AG04449 (cell line): ENCODE measurements at regions of chr12 and their contacts with region 1.

Region 1: DNA sequence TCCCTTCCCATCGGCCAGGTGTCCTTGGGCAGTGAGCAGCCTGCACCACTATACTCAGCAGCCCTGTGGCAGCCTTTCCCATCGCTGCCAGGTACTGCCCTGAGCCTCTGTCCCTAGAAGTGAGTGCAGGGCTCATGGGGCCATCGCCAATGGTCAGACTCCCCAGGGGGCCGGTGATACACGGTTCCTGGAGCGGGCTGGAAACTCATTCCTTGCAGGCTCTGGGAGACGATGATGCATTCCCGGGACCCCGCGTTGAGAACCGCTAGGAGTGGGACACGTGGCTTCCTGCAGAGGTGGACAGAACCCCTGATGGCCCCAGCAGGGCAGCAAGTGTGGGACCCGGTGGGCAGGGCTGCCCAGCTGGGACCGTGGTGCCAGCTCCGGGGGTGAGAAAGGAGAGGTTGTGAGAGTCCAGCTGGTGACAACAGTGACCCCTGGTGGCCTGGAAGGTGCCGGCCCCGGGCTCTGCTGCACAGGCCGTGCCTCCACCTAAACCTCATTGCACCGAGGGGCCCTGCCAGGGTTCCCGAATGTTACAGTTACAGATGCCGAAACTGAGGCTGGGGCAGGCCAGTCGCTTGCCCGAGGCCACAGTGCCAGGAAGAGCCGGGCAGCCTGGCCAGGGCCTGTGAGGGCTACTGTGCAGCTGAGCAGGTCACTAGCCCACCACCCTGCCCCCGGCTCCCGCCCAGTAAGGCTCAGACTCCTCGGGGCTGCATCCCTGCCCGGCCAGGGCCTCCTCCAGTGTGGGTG is 33.8 kb downstream of the FBRSL1 start:
- DNase-seq: no peak
- H3K4me3 ChIP-seq: no peak overlapping the region
- CTCF ChIP-seq: peak; percentile 84

Region 2: GRCh38 chr12:132153501-132154340 is 370.0 kb before region 1 on chr12:
- CTCF ChIA-PET with region 1: interaction called, 14 read pairs
- POLR2A ChIA-PET with region 1: no interaction called
- DNase-seq: peak; percentile 3
- H3K4me3 ChIP-seq: peak overlapping the region; percentile 29
- CTCF ChIP-seq: peak; percentile 96

Region 3: DNA sequence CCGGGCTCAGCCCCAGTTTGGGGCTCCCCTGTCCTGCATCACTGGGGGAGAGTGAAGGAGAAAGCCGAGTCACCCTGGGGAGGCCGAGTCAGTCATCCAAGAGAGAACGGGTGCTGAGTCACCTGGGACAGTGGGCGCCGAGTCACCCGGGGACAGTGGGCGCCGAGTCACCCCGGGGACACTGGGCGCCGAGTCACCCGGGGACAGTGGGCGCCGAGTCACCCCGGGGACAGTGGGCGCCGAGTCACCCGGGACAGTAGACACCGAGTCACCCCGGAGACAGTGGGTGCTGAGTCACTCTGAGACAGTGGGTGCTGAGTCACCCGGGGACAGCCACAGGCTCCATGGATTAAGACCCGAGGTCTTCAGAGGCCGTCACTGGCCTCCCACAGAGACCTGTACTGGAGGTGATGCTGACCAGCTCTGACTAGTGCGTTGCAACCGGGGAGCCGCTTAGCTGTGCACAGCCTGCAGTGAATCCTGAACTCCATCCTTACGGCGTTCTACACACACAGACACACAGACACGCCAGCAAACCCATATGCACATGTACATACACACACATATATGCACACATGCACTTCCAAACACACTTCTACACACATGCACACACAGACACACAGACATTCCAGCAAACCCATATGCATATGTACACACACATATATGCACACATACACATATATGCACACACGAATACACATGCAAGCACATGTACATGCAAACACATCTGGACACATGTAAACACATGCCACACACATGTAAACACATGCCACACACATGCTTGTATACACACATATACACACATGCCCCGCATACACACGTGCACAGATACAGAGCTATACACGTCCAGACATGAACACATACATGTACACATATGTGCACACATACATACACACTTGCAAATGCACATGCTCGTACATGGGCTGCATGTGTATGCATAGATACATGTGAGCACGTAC is 129.5 kb before region 1 on chr12:
- CTCF ChIA-PET with region 1: no interaction called
- POLR2A ChIA-PET with region 1: no interaction called
- DNase-seq: no peak
- H3K4me3 ChIP-seq: no peak overlapping the region
- CTCF ChIP-seq: no peak

Region 4: DNA sequence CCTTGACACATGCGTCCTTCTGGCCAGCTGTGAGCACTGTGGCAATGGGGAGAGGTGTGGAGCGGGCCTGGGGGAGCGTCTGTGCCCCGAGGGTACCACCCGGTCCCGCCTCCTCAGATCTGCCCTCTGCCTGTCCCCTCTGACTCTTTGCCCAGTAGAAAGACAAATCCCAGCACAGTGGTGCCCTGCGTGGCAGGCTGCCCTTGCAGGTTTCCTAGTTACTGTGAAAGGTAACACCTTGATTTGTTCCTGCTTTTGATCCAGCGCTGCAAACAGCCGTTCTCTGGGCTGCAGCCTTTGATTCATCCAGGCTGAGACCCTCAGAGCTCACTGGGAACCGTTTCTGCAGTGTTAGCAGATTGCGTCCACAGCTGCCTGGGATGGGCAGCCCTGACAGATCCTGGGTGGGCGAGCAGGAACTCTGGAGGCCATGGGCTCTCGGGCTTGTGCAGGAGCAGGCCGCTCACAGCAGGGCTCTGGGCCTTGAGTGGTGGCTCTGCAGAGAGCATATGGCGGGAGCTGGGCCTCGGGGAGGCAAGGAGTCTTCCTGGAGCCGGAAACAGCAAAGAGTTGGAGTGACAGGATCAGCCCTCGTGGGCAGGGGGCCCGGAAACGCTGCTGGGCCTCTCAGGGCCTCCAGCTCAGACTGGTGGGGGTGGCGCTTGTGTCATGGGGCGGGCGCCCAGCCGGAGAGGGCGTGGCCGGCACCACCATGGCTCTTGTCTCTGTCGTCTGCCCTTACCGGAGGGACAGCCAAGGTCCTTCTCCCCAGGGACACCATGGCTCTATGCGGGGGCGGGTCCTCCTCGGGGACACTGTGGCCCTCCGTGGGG is 17.2 kb before region 1 on chr12:
- CTCF ChIA-PET with region 1: interaction called, 14 read pairs
- POLR2A ChIA-PET with region 1: no interaction called
- DNase-seq: no peak
- H3K4me3 ChIP-seq: peak overlapping the region; percentile 18
- CTCF ChIP-seq: no peak

Region 5: DNA sequence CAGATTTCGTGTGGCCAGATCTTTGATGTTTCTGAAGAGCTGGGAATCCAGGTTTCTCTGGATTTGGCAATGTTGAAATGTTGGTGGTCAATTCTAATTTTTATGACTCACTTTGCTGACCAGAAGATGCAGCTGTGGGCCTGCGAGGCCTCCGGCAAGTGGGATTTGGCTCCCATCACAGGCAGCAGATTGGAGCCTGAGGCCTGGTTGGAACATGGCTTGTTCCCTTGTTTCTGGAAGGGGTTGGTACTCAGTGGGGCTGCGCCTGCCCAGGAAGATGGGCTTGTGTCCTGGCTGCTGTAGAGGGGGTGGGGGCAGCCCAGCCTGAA is 10.7 kb before region 1 on chr12:
- CTCF ChIA-PET with region 1: interaction called, 14 read pairs
- POLR2A ChIA-PET with region 1: no interaction called
- DNase-seq: no peak
- H3K4me3 ChIP-seq: no peak overlapping the region
- CTCF ChIP-seq: no peak

Region 6: DNA sequence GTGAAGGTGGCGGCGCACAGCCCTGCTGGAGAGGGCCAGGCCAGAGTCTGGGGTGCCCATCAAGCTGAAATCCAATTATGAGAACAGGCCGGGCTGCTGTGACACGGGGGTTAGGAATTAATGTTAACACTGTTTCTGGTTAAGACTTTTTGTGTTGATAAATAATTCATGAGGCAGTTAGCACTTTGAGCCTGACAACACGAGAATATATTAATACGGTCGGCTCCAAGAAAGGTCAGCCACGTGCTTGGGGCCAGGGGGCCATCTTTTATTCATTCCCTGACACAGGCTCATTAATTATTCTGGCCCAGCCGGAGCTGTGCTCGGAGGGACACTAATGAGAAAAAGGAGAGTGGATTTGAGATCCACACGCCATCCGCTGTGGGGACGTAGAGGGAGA is 11.3 kb after region 1 on chr12:
- CTCF ChIA-PET with region 1: interaction called, 10 read pairs
- POLR2A ChIA-PET with region 1: no interaction called
- DNase-seq: no peak
- H3K4me3 ChIP-seq: no peak overlapping the region
- CTCF ChIP-seq: no peak